ENCODE measurements at regions of chr2 and their contacts with region 1.

Region 1: DNA sequence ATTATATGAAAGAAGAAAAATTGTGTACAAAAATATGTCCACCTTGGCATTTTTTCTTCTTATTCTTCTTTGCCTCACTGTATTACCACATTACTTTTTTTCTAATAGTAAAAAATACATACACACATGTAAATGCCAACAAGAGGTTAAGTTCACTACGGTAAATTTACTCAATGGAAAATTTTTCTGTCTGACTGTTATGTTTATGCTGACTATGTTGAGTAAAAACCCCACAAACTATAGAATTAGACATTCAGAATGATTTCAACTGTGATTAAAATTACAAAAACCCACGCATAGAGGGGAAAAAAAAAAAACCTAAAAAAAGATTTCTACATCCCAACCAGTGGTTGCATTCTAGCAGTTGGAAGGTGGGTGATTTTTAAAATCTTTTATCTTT is 5.4 kb downstream of the GPR55 start:
- DNase-seq: no peak
- H3K4me3 Mint-ChIP-seq: no peak overlapping the region
- H3K27ac Mint-ChIP-seq: peak overlapping the region; percentile 47
- H3K4me1 Mint-ChIP-seq: peaks cover 54% of the 10 kb centered on the region
- H3K27me3 Mint-ChIP-seq: peaks cover 46% of the 10 kb centered on the region

Region 2: GRCh38 chr2:230908595-230909191 is 11.0 kb before region 1 on chr2:
- intact Hi-C with region 1: loop called (anchors 1 kb)
- DNase-seq: no peak
- H3K4me3 Mint-ChIP-seq: peak overlapping the region; percentile 74
- H3K27ac Mint-ChIP-seq: peak overlapping the region; percentile 75
- H3K4me1 Mint-ChIP-seq: peaks cover 54% of the 10 kb centered on the region
- H3K27me3 Mint-ChIP-seq: peaks cover 39% of the 10 kb centered on the region